ENCODE measurements at regions of chr3 and their contacts with region 1.

Region 1: GRCh38 chr3:98680723-98681122 is 82.4 kb upstream of the ST3GAL6 start:
- DNase-seq: no peak
- ATAC-seq: no peak
- H3K4me3 ChIP-seq: no peak overlapping the region
- H3K27ac ChIP-seq: no peak overlapping the region
- H3K4me1 ChIP-seq: no peaks in the 10 kb centered on the region
- H3K27me3 ChIP-seq: no peaks in the 10 kb centered on the region

Region 2: GRCh38 chr3:98718521-98719129 is 37.9 kb after region 1 on chr3:
- intact Hi-C with region 1: no loop called
- DNase-seq: no peak
- ATAC-seq: no peak
- H3K4me3 ChIP-seq: no peak overlapping the region
- H3K27ac ChIP-seq: no peak overlapping the region
- H3K4me1 ChIP-seq: no peaks in the 10 kb centered on the region
- H3K27me3 ChIP-seq: no peaks in the 10 kb centered on the region

Region 3: GRCh38 chr3:98893740-98894139 is 213.0 kb after region 1 on chr3:
- intact Hi-C with region 1: loop called in 1 of 4 experiments (anchors 5 kb)
- DNase-seq: no peak
- ATAC-seq: peak; percentile 51 to 57
- H3K4me3 ChIP-seq: no peak overlapping the region
- H3K27ac ChIP-seq: no peak overlapping the region
- H3K4me1 ChIP-seq: peaks cover 12% of the 10 kb centered on the region
- H3K27me3 ChIP-seq: no peaks in the 10 kb centered on the region

Measured in right cardiac atrium (tissue), 5 donors.